ENCODE measurements at regions of chr6 and their contacts with region 1.

Region 1: DNA sequence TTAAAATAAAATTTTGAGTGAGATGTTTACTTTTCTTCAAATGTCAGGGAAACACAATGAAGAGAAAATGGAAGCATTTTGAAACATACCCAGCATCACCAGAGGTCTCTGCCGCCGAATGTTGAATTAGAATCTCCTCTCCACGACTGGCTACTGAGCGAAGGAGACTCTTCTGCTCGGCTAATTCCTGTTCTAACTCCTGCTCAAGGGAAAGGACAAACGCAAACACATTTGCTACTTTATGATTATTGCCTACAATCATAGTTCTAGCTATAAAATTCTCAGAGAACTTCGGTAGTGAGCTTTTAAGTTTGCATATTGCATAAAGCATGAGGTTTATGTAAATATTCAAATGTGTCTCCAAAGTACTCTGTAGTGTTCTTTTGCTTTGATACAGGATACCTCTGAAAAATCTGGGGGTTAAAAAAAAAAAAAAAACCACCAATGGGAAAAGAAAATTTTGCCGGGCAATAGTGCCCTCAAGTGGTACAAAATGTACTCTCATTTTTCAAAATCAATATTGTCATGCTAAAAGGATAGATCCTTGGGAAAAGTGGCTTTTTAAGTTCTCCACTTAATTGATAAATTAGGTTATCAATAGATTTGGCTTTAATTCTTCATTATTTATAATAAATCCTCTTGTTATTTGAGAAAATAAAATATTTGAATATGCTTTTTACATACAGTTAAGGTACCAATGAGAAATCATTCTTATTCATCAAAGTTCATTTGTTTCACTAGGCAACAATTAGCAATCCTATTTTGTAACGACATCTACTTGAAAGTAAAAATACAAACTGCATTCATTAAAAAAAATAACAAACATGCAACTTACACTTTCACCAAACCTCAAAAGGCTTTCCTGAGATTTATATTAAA is 369.0 kb downstream of the SYNE1 start:
- DNase-seq: no peak
- ATAC-seq: no peak
- H3K4me3 ChIP-seq: no peak overlapping the region
- H3K27ac ChIP-seq: no peak overlapping the region
- H3K4me1 ChIP-seq: peaks cover 9% of the 10 kb centered on the region; the same call in 1 of the 2 replicates
- H3K27me3 ChIP-seq: no peaks in the 10 kb centered on the region
- CTCF ChIP-seq: peak; percentile 24 to 61 (median 38); a peak in 3 of 6 replicates
- EP300 ChIP-seq: no peak
- POLR2A ChIP-seq: no peak
- RAD21 ChIP-seq: peak; percentile 79

Region 2: GRCh38 chr6:151440930-151441329 is 827.3 kb before region 1 on chr6:
- CTCF ChIA-PET with region 1: interaction called, 4 read pairs
- POLR2A ChIA-PET with region 1: no interaction called
- RAD21 ChIA-PET with region 1: interaction called, 4 read pairs
- SMC1A ChIA-PET with region 1: no interaction called
- in situ Hi-C with region 1: no loop called
- intact Hi-C with region 1: loop called (anchors 10 kb)
- DNase-seq: no peak
- ATAC-seq: peak; percentile 65
- H3K4me3 ChIP-seq: peak overlapping the region; percentile 32; the same call in 1 of the 2 replicates
- H3K27ac ChIP-seq: peak overlapping the region; percentile 61
- H3K4me1 ChIP-seq: peaks cover 13% of the 10 kb centered on the region
- H3K27me3 ChIP-seq: no peaks in the 10 kb centered on the region
- CTCF ChIP-seq: peak; percentile 24 to 50 (median 49); a peak in 5 of 6 replicates
- EP300 ChIP-seq: no peak
- POLR2A ChIP-seq: no peak
- RAD21 ChIP-seq: peak; percentile 67

Region 3: GRCh38 chr6:151675746-151676416 is 592.3 kb before region 1 on chr6:
- CTCF ChIA-PET with region 1: interaction called, 16 read pairs
- POLR2A ChIA-PET with region 1: no interaction called
- RAD21 ChIA-PET with region 1: interaction called, 4 read pairs
- SMC1A ChIA-PET with region 1: interaction called, 13 read pairs
- in situ Hi-C with region 1: loop called (anchors 5 kb)
- intact Hi-C with region 1: loop called (anchors 2 kb)
- DNase-seq: peak; percentile 11
- ATAC-seq: peak; percentile 96
- H3K4me3 ChIP-seq: no peak overlapping the region
- H3K27ac ChIP-seq: no peak overlapping the region
- H3K4me1 ChIP-seq: peaks cover 5% of the 10 kb centered on the region; the same call in 1 of the 2 replicates
- H3K27me3 ChIP-seq: no peaks in the 10 kb centered on the region
- CTCF ChIP-seq: peak; percentile 95 to 99 (median 96)
- EP300 ChIP-seq: no peak
- POLR2A ChIP-seq: no peak
- RAD21 ChIP-seq: peak; percentile 90

Region 4: DNA sequence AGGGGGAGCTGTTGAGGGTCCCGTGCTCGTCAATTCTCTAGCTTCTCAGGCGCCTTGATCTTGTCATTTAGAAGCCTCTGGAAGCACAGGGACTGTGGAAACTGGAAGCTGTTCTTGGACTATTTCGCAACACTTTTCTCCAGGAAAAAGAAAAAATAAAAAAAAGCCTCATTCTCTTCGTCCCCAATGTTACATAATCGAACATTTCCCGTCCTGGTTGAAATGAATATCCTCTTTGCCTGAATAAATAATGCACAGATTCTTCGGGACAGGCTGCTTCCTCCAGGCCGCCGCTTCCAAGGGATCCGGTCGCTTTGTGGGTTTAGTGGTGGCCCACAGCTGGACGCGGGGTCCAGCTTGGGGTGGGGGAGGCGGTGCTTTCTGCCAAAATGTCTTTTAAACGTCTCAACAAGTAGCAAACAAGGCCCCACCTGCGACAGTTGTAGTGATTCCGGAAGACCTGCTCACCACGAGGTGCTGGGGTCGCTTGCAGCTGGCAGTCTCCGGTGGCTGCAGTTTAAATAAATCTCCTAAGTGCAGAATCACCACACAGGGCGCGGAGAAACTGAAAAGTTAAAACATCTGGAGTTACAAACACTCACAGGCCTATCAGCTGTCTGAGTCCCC is 586.7 kb before region 1 on chr6:
- CTCF ChIA-PET with region 1: interaction called, 16 read pairs
- POLR2A ChIA-PET with region 1: no interaction called
- RAD21 ChIA-PET with region 1: interaction called, 4 read pairs
- SMC1A ChIA-PET with region 1: interaction called, 13 read pairs
- in situ Hi-C with region 1: loop called (anchors 5 kb)
- intact Hi-C with region 1: no loop called
- DNase-seq: no peak
- ATAC-seq: peak; percentile 49
- H3K4me3 ChIP-seq: no peak overlapping the region
- H3K27ac ChIP-seq: no peak overlapping the region
- H3K4me1 ChIP-seq: no peaks in the 10 kb centered on the region
- H3K27me3 ChIP-seq: 0 out of 4 replicates have a peak, but pooled peaks cover 0 to 3% of the 10 kb centered on the region in 2 experiments
- CTCF ChIP-seq: no peak
- EP300 ChIP-seq: no peak
- POLR2A ChIP-seq: no peak
- RAD21 ChIP-seq: no peak

Region 5: GRCh38 chr6:152124429-152125074 is 143.7 kb before region 1 on chr6:
- CTCF ChIA-PET with region 1: interaction called, 21 read pairs
- POLR2A ChIA-PET with region 1: no interaction called
- RAD21 ChIA-PET with region 1: interaction called, 6 read pairs
- SMC1A ChIA-PET with region 1: interaction called, 12 read pairs
- in situ Hi-C with region 1: no loop called
- intact Hi-C with region 1: loop called (anchors 5 kb)
- DNase-seq: no peak
- ATAC-seq: peak; percentile 82
- H3K4me3 ChIP-seq: no peak overlapping the region
- H3K27ac ChIP-seq: no peak overlapping the region
- H3K4me1 ChIP-seq: no peaks in the 10 kb centered on the region
- H3K27me3 ChIP-seq: no peaks in the 10 kb centered on the region
- CTCF ChIP-seq: peak; percentile 57 to 63 (median 58); a peak in 5 of 6 replicates
- EP300 ChIP-seq: no peak
- POLR2A ChIP-seq: no peak
- RAD21 ChIP-seq: peak; percentile 72

Region 6: DNA sequence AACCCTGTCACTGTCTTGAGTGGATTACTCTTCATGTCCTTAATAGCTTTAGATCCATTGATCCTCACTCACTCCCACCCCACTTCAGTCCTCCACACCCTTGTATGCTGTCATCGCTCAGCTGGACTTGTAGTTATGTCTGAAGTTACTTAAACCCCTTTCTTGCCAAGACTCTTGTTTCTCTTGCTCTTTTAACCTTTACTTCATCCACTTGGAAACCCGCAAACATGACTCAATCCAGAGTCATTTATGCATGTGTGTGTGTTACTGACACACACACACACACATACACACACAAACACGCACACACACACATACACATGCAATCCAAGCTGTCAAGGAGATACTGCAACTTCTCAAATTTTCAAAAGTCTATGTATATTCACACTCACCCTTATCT is 27.1 kb after region 1 on chr6:
- CTCF ChIA-PET with region 1: interaction called, 18 read pairs
- POLR2A ChIA-PET with region 1: no interaction called
- RAD21 ChIA-PET with region 1: interaction called, 6 read pairs
- SMC1A ChIA-PET with region 1: interaction called, 12 read pairs
- in situ Hi-C with region 1: no loop called
- intact Hi-C with region 1: no loop called
- DNase-seq: no peak
- ATAC-seq: no peak
- H3K4me3 ChIP-seq: no peak overlapping the region
- H3K27ac ChIP-seq: no peak overlapping the region
- H3K4me1 ChIP-seq: peaks cover 6% of the 10 kb centered on the region
- H3K27me3 ChIP-seq: no peaks in the 10 kb centered on the region
- CTCF ChIP-seq: no peak
- EP300 ChIP-seq: no peak
- POLR2A ChIP-seq: no peak
- RAD21 ChIP-seq: no peak

Region 7: DNA sequence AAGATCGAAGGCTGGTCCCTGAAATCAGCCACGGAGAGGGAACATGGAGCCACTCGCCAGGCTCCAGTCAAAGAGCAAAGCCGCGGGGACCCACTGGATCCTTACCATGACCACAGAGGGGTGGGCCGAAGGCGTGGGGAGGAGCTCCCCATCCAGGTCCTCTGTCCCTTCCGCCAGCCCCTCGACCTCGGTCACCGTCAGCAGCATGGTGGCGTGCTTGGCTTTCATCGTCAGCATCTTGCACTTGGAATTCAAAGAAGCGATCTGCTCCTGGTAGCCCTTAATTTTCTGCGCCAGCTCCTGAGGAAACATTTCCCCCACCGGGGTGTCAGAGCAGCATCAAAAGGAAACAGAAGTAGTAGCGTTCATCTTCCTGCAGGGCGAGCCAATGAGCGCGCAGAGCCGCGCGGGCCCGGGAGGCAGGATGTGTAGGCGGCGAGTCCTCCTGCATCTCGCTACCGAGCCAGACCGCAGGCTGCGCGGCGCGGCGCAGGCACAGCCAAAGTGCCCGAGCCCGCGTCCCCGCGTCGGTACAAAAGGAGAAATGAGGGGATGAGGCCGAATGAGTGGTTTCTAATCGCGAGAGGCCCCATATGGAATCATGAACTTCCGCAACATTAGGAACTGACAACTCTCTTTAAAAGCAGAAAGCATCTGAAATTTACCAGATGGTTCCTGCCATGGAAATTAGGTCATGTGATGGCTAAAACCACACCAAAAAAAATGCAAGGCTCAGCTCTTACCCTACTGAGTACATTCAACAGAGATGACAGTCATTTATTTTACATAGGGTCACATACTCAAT is 33.8 kb after region 1 on chr6:
- CTCF ChIA-PET with region 1: interaction called, 18 read pairs
- POLR2A ChIA-PET with region 1: no interaction called
- RAD21 ChIA-PET with region 1: interaction called, 6 read pairs
- SMC1A ChIA-PET with region 1: interaction called, 12 read pairs
- in situ Hi-C with region 1: no loop called
- intact Hi-C with region 1: no loop called
- DNase-seq: peak; percentile 74
- ATAC-seq: peak; percentile 92
- H3K4me3 ChIP-seq: peak overlapping the region; percentile 72
- H3K27ac ChIP-seq: peak overlapping the region; percentile 84
- H3K4me1 ChIP-seq: peaks cover 6% of the 10 kb centered on the region
- H3K27me3 ChIP-seq: no peaks in the 10 kb centered on the region
- CTCF ChIP-seq: peak; percentile 51 to 56 (median 53)
- EP300 ChIP-seq: no peak; a peak in 2 of 4 replicates
- POLR2A ChIP-seq: peak; percentile 92
- RAD21 ChIP-seq: peak; percentile 50

Measured in GM12878 (cell line).